ENCODE measurements at regions of chr6 and their contacts with region 1.

Region 1: DNA sequence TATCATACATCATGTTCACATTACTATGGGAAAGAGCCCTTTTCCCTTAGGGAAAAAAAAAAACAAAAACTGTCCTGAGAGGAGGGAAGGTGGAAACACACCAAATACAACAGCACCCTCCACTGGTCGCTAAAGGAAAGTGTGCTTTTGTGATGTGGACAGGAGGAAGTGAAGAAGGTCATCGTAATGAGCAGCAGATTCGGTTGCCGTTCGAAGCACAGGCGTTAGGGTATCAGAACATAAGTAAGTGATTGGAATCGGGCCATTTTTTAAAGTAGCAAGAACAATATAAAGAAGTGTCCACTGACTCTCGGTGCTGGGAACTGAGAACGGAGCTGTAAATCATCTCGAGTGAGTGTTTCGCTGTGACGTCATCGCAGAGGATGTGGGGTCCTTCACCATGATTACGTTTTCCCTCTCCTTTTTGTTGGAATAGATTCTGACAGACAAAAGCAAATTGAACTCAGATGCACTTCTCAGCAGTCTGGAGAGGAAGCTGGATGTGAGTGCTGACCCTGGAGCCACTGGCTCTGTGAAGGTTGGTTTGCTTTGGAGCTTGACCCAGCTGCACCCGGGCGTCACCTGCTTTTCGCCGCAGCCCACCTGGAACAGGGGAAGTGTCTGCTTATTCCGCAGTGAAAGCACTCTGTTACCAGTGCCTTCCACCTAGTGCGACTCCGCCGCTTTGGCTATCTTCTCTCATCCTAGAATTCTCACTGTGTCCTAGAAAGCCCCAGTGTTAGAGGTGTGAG is 203.6 kb upstream of the GMDS start:
- H3K4me3 Mint-ChIP-seq: no peak overlapping the region
- H3K27ac Mint-ChIP-seq: no peak overlapping the region
- H3K4me1 Mint-ChIP-seq: no peaks in the 10 kb centered on the region
- H3K27me3 Mint-ChIP-seq: peaks cover 3% of the 10 kb centered on the region

Region 2: GRCh38 chr6:1604158-1605030 is 844.6 kb before region 1 on chr6:
- intact Hi-C with region 1: loop called (anchors 5 kb)
- H3K4me3 Mint-ChIP-seq: peak overlapping the region; percentile 44
- H3K27ac Mint-ChIP-seq: no peak overlapping the region
- H3K4me1 Mint-ChIP-seq: peaks cover 39% of the 10 kb centered on the region
- H3K27me3 Mint-ChIP-seq: peaks cover 92% of the 10 kb centered on the region

Region 3: GRCh38 chr6:2209226-2209809 is 239.7 kb before region 1 on chr6:
- intact Hi-C with region 1: loop called (anchors 10 kb)
- H3K4me3 Mint-ChIP-seq: no peak overlapping the region
- H3K27ac Mint-ChIP-seq: no peak overlapping the region
- H3K4me1 Mint-ChIP-seq: no peaks in the 10 kb centered on the region
- H3K27me3 Mint-ChIP-seq: no peaks in the 10 kb centered on the region

Region 4: DNA sequence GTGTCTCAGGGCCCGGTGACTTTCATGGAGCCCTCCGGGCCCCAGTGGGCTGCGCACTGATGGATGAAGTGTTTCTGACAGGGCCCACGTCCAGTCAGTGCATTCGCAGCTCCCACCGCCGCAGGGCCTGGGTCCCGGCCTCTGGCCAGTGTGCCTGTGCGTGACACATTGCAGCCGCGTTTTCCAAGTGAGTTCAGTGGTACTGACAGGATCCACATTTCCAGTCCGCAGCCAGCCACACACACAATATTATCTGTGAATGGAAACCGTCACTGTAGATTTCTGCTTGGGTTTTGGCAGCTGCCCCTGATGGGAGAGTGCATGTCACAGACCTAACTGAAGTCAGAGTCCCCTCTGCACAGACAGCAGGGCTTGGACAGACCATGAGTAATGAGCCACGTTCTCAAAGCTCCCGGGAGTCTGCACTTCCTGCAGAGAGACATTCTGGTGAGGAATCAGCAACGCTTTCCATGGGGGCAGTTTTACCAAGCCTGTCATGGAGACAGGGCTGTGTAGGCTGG is 130.3 kb after region 1 on chr6:
- intact Hi-C with region 1: no loop called
- H3K4me3 Mint-ChIP-seq: no peak overlapping the region
- H3K27ac Mint-ChIP-seq: peak overlapping the region; percentile 41
- H3K4me1 Mint-ChIP-seq: peaks cover 7% of the 10 kb centered on the region
- H3K27me3 Mint-ChIP-seq: peaks cover 9% of the 10 kb centered on the region